ENCODE measurements at regions of chr19 and their contacts with region 1.

Region 1: DNA sequence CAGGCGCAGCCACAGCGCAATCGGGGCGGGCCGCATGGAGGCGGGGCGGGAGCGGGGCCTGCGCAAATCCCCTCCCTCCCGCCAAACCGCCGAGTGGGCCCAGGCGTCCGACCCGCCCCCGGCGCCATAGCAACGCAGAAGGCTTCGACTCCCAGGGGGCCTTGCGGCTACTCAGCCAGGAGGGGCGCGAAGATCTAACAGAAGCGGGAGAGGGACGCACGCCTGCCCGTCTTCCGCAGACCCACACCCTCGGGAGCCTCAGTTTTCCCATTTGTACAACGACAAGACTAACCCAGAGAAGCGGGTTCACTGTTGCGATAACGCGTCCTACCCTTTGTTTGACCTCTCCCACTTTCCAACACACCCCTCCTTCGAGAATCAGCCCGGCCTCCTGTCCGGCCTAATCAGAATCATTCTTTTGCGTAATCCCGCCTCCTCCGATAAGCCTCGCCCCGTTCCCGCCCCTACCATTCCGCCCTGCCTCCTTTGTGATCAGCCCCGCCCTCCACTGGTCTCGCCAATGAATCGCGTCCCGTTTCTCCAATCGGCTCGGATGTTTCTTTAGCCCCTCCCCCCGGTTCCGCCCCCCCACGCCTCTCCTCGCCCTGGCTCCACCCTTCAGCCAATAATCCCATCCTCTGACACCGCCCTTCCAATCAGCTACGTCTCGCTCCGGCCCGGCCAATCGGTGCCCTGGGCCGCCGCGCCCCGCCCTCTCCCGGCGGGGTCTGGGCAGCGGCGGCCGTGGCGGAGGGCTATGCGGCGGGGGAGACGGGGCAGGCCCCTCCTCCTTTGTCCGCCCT is at the start of gene PCSK4:
- DNase-seq: peak; percentile 99
- ATAC-seq: peak; percentile 93 to 96 (median 95)
- H3K4me3 ChIP-seq: peak within 1 kb of the TSS; percentile 35 to 77 (median 60)
- H3K27ac ChIP-seq: peak within 1 kb of the TSS in 11 of 12 donors; percentile 55 to 87 (median 78)
- H3K4me1 ChIP-seq: peaks cover 3 to 29% (median 14%) of the 10 kb centered on the region in 12 donors
- H3K27me3 ChIP-seq: peaks cover 0 to 13% (median 0%) of the 10 kb centered on the region in 9 donors
- CTCF ChIP-seq: no peak
- POLR2A ChIP-seq: no peak
- total RNA-seq, gene PCSK4: 0.31 to 1.9 (median 1.7) TPM

Region 2: GRCh38 chr19:1478934-1479707 is 11.4 kb before region 1 on chr19 and contains the start of gene C19orf25:
- intact Hi-C with region 1: loop called in 1 of 10 experiments (anchors 1 kb)
- DNase-seq: peak; percentile 94 to 98 (median 96)
- ATAC-seq: peak; percentile 94 to 98 (median 96)
- H3K4me3 ChIP-seq: peak within 1 kb of the TSS; percentile 80 to 99 (median 94)
- H3K27ac ChIP-seq: peak within 1 kb of the TSS; percentile 27 to 82 (median 70)
- H3K4me1 ChIP-seq: peaks cover 0 to 30% (median 23%) of the 10 kb centered on the region in 12 donors
- H3K27me3 ChIP-seq: no peaks in the 10 kb centered on the region
- CTCF ChIP-seq: no peak
- POLR2A ChIP-seq: peak in 1 of 2 donors; percentile 77
- total RNA-seq, gene C19orf25: 9.4 to 29.2 (median 15.7) TPM